Cardiac septum (tissue), 1 donor: ENCODE measurements at regions of chr12 and their contacts with region 1.

Region 1: DNA sequence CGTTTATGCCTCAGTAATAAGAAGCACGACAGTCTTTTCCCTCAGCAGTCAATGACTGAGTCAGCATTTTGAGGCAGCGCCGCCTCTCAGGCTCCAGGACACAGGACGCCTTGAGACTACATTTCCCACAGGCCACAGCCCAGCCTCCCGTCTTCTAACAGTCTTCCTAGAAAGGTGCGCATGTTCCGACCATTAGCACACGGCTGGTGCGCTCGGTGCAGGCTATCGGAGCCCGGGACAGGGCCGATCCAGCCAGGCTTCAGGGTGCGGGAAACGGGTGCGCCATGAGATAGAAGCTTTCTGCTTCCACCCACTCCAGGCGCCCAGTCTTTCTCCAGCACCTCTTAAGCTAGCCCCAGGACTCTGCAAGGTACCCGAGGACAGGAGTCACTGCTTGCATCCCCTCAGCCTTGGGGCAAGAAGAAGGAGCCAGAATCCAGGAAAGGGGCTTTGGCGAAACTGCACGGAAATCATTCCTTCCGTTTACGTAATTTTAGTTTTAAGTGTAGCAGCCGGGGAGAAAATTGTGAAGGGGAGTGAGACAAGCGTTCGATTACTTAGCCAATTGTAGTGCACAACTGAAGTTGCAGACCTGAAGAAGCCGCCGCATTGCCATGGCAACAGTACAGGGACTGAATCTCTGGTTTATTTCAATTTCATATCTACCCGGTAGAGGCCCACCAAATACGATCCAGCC is 54.0 kb downstream of the ZNF641 start:
- DNase-seq: peak; percentile 78

Region 2: DNA sequence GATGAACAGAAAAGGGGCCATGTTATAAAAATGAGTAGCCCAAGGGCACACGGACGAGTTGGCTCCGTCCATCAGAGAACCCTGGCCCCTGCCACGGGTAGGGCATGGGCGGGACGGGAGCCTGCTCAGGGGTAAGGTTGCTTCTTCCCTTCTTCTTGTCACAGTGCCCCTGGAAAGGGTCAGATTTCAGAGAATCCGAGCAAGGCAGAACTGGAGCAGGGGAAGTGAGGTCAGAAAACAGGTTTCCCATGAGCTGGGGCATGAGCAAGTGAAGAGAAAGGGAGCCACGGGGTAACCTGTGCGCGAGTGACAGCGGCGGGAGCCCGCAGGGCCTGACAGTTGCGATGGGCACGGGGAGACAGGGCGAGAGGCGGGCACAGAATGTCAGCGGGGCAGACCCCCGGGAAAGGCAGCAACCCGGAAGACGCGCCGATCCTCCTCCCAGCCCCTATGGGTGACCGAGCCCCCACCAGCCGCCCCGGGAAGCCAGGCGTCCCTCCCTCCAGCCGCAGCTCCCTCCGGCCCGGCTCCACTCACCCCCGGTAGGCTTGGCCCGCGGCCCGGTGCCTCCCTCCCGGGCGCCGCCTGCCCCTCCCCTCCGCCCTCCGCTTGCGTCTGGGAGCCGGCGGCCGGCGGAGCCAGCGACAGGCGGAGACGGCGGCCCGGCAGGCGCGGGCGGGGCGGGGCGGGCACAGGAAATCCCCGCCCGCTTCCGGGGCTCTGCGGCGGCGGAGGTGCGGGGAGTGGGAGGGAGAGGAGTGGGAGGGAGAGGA is 53.7 kb after region 1 on chr12 and contains the start of gene ZNF641:
- intact Hi-C with region 1: loop called (anchors 2 kb)
- DNase-seq: peak; percentile 93
- total RNA-seq, gene ZNF641: 15.3 TPM

Region 3: DNA sequence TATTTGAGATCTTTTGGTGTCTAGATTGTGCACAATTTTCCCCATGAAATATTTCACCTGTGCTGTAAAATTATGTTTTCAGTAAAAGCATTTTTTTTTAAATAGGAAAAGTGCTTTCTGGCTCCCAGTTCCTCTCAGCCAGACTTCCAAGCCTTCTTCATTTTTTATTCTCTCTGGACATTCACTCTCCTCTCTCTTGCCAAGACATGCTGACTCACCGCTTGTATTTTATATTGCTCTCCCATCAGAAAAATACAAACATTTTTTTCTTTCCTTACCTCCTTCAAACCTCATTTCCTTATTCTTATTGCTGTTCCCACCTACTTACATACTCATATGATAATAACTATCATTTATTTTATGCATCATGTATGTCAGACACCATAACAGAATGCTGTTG is 91.7 kb after region 1 on chr12:
- intact Hi-C with region 1: no loop called
- DNase-seq: no peak